Keratinocyte (primary cell): ENCODE measurements at regions of chr4 and their contacts with region 1.

Region 1: DNA sequence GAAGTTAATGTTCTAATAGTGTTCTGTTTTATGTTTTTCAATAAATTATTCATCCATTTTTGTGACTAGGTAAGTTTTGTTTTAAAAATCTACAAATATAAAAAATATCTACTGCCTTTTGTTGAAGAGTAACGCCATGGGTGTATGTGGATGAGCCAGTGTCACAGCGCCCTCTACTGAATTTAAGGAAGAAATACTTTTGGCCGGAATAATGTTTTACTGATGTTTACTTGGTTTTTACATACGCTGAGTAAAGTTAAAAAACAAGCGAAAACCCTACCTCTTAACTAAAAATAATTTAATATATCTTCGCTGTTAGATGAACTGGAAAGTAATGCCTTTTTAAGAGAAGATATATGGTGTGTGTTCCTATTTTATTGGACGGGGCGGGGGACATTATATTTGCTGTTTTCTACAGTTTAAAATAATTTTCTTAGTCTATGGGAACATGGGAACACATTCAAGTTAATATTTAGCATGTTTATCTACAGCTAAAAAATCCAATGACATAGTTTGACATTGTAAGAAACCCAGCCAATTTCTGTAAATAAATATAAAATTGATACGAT is 86.1 kb downstream of the CPE start:
- DNase-seq: no peak
- H3K4me3 ChIP-seq: no peak overlapping the region
- H3K27ac ChIP-seq: no peak overlapping the region
- H3K4me1 ChIP-seq: no peaks in the 10 kb centered on the region
- H3K27me3 ChIP-seq: no peaks in the 10 kb centered on the region
- CTCF ChIP-seq: peak; percentile 52 to 58 (median 54)

Region 2: DNA sequence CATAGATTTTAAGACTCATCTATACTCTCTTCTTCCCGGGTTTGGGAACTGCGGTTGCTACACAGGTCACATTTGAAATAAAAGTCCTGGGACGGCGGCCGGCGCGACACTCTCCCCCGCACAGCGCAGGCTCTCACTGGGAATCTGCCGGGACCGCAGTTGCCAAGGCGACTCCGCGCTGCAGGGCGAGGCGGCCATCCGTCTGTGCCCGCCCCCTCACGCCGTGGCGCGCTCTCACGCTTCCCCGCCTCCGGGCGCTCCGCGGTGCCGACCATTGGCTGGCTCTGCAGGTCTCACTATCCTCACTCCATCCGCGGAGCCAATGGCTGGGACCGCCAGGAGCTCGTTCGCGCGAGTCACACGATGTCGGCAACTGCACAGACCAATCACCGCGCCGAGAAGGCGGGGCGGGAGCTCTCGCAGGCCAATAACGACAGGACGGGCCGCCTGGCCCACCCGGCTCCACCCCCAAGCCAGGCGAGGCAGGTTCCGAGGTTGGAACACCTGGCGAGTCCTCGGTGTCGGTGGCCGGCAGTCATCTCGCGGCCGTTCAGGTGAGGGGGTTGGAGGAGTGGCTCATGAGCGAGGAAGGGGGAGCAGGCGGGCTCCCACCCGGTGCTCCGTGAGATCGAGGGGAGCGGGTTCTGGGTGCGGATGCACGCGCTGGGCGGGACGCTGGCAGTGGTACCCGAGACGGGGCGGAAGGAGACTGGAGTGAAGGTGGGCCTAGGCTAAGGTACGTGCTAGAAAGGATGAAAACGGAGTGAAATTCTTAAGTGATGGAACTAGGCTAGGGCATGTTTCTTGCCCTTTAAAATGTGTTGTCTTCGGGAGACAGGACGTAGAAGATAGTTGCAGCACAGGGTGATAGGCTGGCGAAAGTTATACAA is 137.4 kb before region 1 on chr4 and contains the start of gene MSMO1:
- dilution Hi-C with region 1: loop called (anchors 25 kb)
- DNase-seq: no peak
- H3K4me3 ChIP-seq: peak within 1 kb of the TSS; percentile 68 to 100 (median 83)
- H3K27ac ChIP-seq: peak within 1 kb of the TSS; percentile 97
- H3K4me1 ChIP-seq: peaks cover 34% of the 10 kb centered on the region
- H3K27me3 ChIP-seq: no peaks in the 10 kb centered on the region
- CTCF ChIP-seq: no peak
- polyA plus RNA-seq, gene MSMO1: 334 to 541 TPM (median 482 TPM) in 3 replicates